Activated CD4-positive, alpha-beta memory T cell treated with anti-CD3 and anti-CD28 coated beads for 36 hours (primary cell): ENCODE measurements at regions of chr9 and their contacts with region 1.

Region 1: DNA sequence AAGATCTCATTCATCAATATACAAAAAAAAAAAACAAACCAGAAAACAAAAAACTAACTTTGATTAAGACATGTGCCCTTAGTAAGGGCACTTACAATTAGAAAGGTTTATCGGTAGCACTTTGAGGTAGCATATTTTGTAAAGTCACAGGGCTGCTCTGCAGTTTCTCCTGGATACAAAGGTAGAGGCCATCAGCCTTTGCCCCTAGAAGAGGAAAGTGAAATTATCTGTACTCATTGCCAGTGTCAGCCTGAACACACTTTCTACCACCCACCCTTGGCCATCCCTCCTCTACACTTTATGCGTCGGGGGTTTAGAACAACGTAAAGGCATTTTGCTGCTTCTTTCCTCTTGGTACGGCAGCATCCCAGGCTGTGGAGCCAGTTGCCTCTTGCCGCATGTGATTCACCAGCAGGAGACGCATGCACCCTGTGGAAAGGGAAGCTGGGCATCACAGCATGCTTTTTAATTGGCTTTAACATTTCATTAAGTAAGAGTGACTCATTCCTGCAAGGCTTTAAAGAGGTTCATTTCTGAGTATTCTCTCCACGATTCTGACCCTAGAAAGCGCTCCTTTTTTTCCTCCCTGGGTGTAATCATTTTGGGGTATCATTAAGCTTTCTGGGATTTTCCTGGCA is 84.6 kb downstream of the CEMIP2 start:
- DNase-seq: no peak
- H3K4me3 Mint-ChIP-seq: no peak overlapping the region
- H3K27ac Mint-ChIP-seq: no peak overlapping the region
- H3K4me1 Mint-ChIP-seq: peaks cover 38% of the 10 kb centered on the region
- H3K27me3 Mint-ChIP-seq: no peaks in the 10 kb centered on the region

Region 2: GRCh38 chr9:71638627-71639026 is 45.1 kb before region 1 on chr9:
- CTCF ChIA-PET with region 1: no interaction called
- POLR2A ChIA-PET with region 1: no interaction called
- intact Hi-C with region 1: loop called (anchors 2 kb)
- DNase-seq: peak; percentile 33
- H3K4me3 Mint-ChIP-seq: peak overlapping the region; percentile 31
- H3K27ac Mint-ChIP-seq: peak overlapping the region; percentile 1
- H3K4me1 Mint-ChIP-seq: peaks cover 25% of the 10 kb centered on the region
- H3K27me3 Mint-ChIP-seq: no peaks in the 10 kb centered on the region

Region 3: DNA sequence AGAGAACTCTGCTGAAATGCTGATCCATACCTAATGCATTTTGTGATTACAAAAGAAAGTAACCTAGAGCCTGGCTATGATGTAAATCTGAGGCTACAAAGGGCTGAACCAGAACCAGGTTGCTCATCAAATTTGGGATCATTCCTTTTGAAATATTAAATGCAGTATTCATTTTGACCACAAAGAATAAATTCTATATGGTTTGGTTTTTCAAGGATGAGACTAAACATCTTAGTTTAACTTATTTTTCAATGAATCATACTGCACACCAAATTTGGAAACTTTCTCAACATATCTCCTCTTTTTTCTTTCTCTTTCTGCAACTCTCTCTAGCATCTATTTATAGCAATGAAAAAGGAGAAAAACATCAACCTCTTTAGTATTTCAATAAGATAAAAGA is 38.1 kb after region 1 on chr9:
- CTCF ChIA-PET with region 1: interaction called, 9 read pairs
- POLR2A ChIA-PET with region 1: no interaction called
- intact Hi-C with region 1: loop called (anchors 5 kb)
- DNase-seq: no peak
- H3K4me3 Mint-ChIP-seq: no peak overlapping the region
- H3K27ac Mint-ChIP-seq: no peak overlapping the region
- H3K4me1 Mint-ChIP-seq: no peaks in the 10 kb centered on the region
- H3K27me3 Mint-ChIP-seq: no peaks in the 10 kb centered on the region

Region 4: DNA sequence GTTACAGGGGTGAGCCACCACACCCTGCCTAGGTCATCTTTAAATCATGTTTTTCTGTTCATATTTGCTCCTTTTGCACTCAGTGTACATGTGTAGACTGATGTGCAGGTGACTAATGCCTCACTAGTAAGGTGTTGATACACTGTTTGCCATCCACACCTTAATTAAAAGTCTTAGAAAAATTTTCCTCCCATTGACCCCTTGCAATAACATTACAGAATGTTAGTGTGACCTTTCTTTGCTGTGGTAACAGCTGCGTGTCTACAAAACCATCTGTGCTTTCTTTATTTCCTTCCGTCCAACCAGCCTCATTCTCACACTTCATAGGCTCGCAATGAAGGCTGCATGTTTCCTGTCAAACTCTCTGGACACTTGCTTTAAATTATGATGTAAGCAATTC is 91.2 kb after region 1 on chr9:
- CTCF ChIA-PET with region 1: no interaction called
- POLR2A ChIA-PET with region 1: no interaction called
- intact Hi-C with region 1: no loop called
- DNase-seq: no peak
- H3K4me3 Mint-ChIP-seq: no peak overlapping the region
- H3K27ac Mint-ChIP-seq: no peak overlapping the region
- H3K4me1 Mint-ChIP-seq: peaks cover 5% of the 10 kb centered on the region
- H3K27me3 Mint-ChIP-seq: no peaks in the 10 kb centered on the region